Tibial artery (tissue), 4 donors: ENCODE measurements at regions of chr15 and their contacts with region 1.

Region 1: DNA sequence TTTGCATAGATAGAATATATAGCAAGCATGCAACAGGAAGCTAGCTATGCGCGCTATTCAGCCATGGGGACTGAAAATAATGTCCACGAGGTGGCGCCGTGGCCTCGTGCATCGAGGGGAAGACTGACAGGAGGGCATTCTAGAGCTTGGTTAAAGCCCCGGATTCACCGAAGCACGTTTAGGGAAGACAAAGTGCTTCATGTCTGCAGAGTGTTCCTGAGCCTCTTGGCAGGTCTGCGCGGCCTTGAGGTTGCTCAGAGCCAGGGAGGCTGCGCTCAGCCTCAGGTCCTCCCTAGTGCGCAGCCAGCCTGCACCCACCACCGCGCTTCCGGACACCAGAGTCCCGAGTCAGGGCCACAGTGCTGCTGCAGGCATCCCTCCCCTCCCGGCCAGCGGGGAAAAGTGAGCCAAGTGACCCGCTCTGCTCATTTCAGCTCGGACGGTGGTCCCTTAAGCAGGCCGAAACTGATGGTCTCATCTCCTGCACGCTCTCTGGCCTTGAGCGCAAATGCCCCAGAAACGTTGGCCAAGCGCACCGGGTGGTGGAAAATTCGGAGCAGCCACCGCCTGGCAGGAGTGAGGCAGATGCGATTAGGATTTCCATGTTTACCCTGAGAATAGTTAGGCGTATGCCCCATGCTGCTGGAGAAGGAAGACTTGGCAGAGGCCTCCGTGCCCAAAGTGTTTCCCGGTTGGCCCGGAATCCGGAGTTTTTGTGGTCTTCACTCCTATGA is 24.8 kb downstream of the GABRA5 start:
- DNase-seq: no peak
- H3K4me3 ChIP-seq: peak overlapping the region; percentile 23 to 34
- H3K27ac ChIP-seq: no peak overlapping the region
- H3K4me1 ChIP-seq: peaks cover 0 to 19% (median 9%) of the 10 kb centered on the region in 4 donors
- H3K27me3 ChIP-seq: peaks cover 0 to 21% of the 10 kb centered on the region in 2 donors
- CTCF ChIP-seq: peak; percentile 18 to 48

Region 2: DNA sequence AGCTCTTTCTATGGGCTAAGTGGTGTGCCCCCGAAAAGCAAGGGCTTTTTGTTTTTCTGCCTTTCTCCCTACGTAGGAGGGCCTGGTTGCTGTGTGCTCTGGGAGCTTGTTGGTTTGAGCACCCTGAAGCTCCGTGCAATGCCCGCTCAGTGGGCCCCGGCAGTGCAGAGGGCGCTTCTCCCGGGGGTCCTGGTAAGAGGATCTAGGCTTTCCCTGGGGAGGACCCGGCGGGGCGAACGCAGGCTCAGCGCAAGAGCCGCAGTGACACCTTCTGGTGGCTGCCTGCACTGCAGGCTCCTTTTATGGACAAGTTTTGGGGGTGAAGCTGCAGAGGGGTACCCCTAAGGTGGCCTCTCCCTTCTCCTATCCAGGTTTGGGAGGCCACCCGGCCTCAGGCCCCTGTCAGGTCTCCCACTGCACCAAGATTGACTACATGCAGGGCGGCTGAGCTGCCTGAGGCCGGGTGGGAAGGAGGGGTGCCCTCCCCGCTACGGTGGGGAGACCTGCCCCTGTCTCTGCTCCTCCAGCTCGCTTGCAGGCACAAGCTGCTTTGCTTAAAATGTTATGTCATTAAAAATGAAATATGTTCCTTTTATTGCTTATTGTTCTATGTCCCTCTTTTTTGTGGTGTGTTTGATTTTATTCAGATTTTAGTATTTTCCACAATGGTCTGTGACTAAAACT is 467.3 kb after region 1 on chr15:
- intact Hi-C with region 1: loop called (anchors 5 kb)
- DNase-seq: no peak
- H3K4me3 ChIP-seq: no peak overlapping the region
- H3K27ac ChIP-seq: no peak overlapping the region
- H3K4me1 ChIP-seq: no peaks in the 10 kb centered on the region
- H3K27me3 ChIP-seq: peaks cover 0 to 7% of the 10 kb centered on the region in 2 donors
- CTCF ChIP-seq: peak; percentile 26 to 42